Common myeloid progenitor, CD34-positive (primary cell): ENCODE measurements at regions of chr5 and their contacts with region 1.

Region 1: GRCh38 chr5:145825751-145826180 is 9.4 kb downstream of the PRELID2 start:
- DNase-seq: peak; percentile 65 to 77 (median 76)
- H3K4me3 ChIP-seq: no peak overlapping the region
- H3K27ac ChIP-seq: no peak overlapping the region
- H3K4me1 ChIP-seq: peaks cover 8 to 22% (median 14%) of the 10 kb centered on the region in 4 experiments
- H3K27me3 ChIP-seq: no peaks in the 10 kb centered on the region

Region 2: GRCh38 chr5:144203750-144204596 is 1621.8 kb before region 1 on chr5:
- CTCF ChIA-PET with region 1: interaction called, 14 read pairs
- POLR2A ChIA-PET with region 1: no interaction called
- DNase-seq: peak; percentile 71 to 82 (median 77)
- H3K4me3 ChIP-seq: no peak overlapping the region
- H3K27ac ChIP-seq: no peak overlapping the region
- H3K4me1 ChIP-seq: peaks cover 0 to 6% (median 5%) of the 10 kb centered on the region in 4 experiments
- H3K27me3 ChIP-seq: peaks cover 6 to 36% (median 26%) of the 10 kb centered on the region in 5 experiments

Region 3: GRCh38 chr5:145775893-145776444 is 49.8 kb before region 1 on chr5:
- CTCF ChIA-PET with region 1: no interaction called
- POLR2A ChIA-PET with region 1: no interaction called
- DNase-seq: peak in 2 of 3 donors; percentile 8 to 22
- H3K4me3 ChIP-seq: no peak overlapping the region
- H3K27ac ChIP-seq: no peak overlapping the region
- H3K4me1 ChIP-seq: no peaks in the 10 kb centered on the region
- H3K27me3 ChIP-seq: no peaks in the 10 kb centered on the region

Region 4: DNA sequence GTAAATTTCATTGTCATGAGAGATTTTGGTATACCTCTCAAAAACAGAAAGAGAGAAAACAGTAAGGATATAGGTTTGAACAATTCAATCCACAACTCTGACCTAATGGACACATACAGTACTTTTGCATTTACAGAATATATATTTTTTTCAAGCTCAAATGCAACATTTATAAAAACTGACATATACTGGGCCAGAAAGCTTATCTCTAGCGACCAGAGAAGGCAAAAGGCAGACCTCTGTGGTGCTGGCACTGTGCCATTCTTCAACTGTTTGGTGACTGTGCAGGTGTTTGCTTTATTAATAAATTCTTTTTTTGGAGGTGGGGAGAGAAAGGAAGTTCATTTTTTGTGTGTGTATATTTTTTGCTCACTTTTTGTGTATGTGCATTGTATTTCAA is 285.6 kb after region 1 on chr5:
- CTCF ChIA-PET with region 1: no interaction called
- POLR2A ChIA-PET with region 1: no interaction called
- DNase-seq: peak; percentile 79 to 96 (median 94)
- H3K4me3 ChIP-seq: peak overlapping the region in 1 of 7 experiments; percentile 33
- H3K27ac ChIP-seq: peak overlapping the region in 1 of 2 experiments; percentile 59
- H3K4me1 ChIP-seq: peaks cover 8 to 27% (median 13%) of the 10 kb centered on the region in 4 experiments
- H3K27me3 ChIP-seq: no peaks in the 10 kb centered on the region